Spleen (tissue), 13 donors: ENCODE measurements at regions of chr1 and their contacts with region 1.

Region 1: DNA sequence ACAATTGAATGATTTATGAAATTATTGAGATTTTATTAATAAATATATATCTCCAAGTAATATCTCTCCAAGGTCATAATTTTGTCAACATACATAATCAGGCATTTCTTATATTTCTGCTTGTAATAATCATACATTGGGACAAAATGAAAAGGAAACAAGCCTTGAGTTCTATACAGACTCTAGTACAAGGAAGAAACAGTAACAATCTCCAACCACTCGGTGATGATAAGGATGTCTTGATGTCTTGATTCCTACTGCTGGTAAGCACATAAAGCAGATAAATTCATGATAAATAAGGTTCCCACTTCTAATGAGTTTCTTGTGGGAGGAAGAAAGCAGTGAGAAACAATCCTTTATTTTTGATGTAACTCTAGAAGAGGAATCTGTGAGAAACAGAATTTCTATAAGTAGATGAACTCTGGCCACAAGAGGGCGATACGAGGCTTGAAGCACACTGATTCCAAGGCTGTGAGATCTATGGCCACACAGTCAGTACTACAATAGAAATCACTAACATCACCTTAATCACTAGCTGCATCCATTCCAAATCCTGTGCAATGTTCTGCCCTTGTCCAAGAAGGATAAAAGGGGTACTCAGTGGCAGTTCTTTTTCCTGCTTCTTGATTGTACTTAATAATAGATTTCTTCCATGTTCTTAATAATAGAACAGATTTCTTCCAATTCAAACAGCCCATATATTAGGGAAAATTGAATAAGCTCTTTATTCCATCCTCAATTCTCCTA is 41.4 kb upstream of the LRRC8B start:
- DNase-seq: no peak
- H3K4me3 ChIP-seq: no peak overlapping the region
- H3K27ac ChIP-seq: no peak overlapping the region
- H3K4me1 ChIP-seq: peaks cover 0 to 13% (median 0%) of the 10 kb centered on the region in 6 donors
- H3K27me3 ChIP-seq: no peaks in the 10 kb centered on the region
- CTCF ChIP-seq: peak in 10 of 11 experiments; percentile 32 to 77 (median 70)
- POLR2A ChIP-seq: no peak

Region 2: DNA sequence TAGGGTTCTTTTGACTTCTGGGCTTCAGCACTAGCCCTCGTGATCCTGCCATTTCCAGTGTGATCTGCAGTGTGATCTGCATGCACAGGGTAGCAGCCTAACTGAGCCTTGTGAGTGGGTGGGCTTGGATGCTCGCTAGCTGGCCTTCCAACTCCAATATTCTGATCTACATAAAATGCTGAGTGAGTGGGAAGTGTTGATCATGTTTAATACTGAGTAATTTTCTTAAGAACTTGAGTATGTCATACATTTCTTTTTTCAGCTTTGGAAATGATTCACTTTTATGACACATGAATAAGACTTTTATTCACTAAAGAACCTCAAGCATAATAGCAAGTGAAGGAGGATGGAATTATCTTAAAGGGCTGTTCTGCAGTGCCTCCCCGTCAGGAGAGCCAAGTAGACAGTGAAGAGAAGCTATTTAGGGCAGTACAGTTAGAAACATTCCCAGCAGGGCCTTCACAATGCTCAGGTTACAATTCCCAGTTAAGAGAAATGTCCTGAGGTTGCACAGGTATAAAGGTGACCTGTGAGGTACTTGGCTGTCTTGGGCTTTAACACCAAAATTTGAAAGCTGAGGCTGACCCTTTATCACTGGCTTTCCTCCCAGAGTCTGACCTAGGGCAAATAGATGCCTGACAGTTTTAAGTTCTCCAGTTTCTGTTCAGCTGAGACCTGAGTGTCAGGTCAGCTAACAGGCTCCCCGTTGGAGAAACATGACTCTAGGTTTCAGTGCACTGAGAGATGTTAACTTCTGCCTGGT is 120.6 kb after region 1 on chr1:
- intact Hi-C with region 1: loop called (anchors 5 kb)
- DNase-seq: no peak
- H3K4me3 ChIP-seq: no peak overlapping the region
- H3K27ac ChIP-seq: peak overlapping the region in 1 of 8 donors; percentile 77
- H3K4me1 ChIP-seq: peaks cover 5 to 66% (median 18%) of the 10 kb centered on the region in 6 donors
- H3K27me3 ChIP-seq: no peaks in the 10 kb centered on the region
- CTCF ChIP-seq: no peak
- POLR2A ChIP-seq: no peak

Region 3: DNA sequence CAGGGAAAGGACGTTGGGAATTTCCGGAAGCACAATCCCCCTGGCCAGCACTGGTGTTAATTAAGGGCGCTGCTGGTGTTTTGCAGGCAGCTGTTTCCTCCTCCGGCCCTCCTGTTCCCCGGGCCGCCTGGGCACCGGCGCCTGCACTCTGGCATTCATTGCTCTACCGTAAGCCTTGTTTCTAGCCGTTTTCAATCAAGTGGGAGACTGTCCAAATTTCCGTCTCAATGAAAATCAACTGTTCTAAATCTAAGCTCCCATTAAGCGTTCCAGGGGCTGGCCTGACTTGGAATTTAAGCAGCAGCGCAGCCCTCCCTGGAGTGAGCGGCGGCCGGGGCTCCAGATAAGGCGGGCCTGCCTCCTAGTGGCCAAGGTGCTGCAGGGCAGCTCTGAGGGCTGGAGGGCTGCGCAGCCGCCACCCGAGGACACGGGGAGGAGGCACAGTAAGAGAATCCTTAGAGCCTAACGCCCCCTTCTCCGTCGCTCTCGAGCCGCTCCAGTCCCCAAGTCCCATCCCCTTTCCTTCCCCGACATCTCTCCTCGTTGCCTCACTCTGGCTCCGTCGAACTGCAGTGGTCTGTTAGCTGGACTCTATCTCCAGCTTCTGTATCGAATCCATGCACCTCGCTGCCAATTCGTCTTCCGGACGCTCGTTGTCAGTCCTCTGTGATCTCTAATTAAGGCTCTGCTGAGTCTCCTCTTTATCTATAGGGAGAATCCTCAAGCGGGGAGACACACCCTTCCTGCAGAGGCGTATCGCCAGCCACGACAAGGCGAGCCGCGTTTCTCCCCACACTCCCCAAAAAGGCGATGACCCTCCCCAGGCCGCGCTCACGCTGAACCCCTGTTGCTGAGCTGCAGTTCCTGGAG is 279.8 kb after region 1 on chr1:
- intact Hi-C with region 1: loop called (anchors 5 kb)
- DNase-seq: peak; percentile 98
- H3K4me3 ChIP-seq: peak overlapping the region; percentile 24 to 69 (median 43)
- H3K27ac ChIP-seq: peak overlapping the region; percentile 10 to 77 (median 52)
- H3K4me1 ChIP-seq: peaks cover 14 to 60% (median 35%) of the 10 kb centered on the region in 6 donors
- H3K27me3 ChIP-seq: no peaks in the 10 kb centered on the region
- CTCF ChIP-seq: peak; percentile 97 to 100 (median 99)
- POLR2A ChIP-seq: no peak